K562 (cell line): ENCODE measurements at regions of chr1 and their contacts with region 1.

Region 1: GRCh38 chr1:219416594-219417238 is 196.2 kb downstream of the ZC3H11B start:
- DNase-seq: peak; percentile 26 to 72 (median 36)
- ATAC-seq: peak; percentile 97
- H3K4me3 ChIP-seq: no peak overlapping the region
- H3K27ac ChIP-seq: no peak overlapping the region
- H3K4me1 ChIP-seq: no peaks in the 10 kb centered on the region
- H3K27me3 ChIP-seq: no peaks in the 10 kb centered on the region
- CTCF ChIP-seq: peak; percentile 72 to 80 (median 76)
- EP300 ChIP-seq: no peak
- POLR2A ChIP-seq: no peak
- RAD21 ChIP-seq: peak; percentile 58 to 78

Region 2: DNA sequence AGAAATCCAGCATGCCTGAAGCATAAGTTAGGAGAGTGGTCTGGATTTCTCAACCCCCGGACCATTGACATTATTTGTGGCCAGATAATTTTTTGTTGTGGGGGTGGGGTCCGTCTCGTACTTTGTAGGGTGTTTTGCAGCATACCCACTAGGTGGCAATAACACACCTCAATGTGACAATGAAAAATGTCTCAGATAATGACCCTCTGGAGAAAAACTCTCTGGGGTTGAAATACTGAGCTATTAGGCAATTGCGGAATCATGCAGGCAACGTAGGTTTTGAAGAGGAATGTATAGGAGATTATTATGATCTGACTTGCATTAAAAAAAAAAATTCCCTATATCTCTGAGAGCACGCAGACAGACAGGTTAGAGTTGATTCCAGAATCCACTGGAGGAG is 1156.9 kb before region 1 on chr1:
- CTCF ChIA-PET with region 1: no interaction called
- POLR2A ChIA-PET with region 1: no interaction called
- in situ Hi-C with region 1: no loop called
- intact Hi-C with region 1: loop called (anchors 5 kb)
- DNase-seq: peak; percentile 33 to 69 (median 51)
- ATAC-seq: peak; percentile 96
- H3K4me3 ChIP-seq: no peak overlapping the region
- H3K27ac ChIP-seq: no peak overlapping the region
- H3K4me1 ChIP-seq: no peaks in the 10 kb centered on the region
- H3K27me3 ChIP-seq: peaks cover 0 to 3% of the 10 kb centered on the region in 2 experiments; a peak in 1 of 5 replicates
- CTCF ChIP-seq: peak; percentile 62 to 72 (median 68)
- EP300 ChIP-seq: no peak
- POLR2A ChIP-seq: no peak
- RAD21 ChIP-seq: peak; percentile 15 to 71; a peak in 3 of 4 replicates

Region 3: DNA sequence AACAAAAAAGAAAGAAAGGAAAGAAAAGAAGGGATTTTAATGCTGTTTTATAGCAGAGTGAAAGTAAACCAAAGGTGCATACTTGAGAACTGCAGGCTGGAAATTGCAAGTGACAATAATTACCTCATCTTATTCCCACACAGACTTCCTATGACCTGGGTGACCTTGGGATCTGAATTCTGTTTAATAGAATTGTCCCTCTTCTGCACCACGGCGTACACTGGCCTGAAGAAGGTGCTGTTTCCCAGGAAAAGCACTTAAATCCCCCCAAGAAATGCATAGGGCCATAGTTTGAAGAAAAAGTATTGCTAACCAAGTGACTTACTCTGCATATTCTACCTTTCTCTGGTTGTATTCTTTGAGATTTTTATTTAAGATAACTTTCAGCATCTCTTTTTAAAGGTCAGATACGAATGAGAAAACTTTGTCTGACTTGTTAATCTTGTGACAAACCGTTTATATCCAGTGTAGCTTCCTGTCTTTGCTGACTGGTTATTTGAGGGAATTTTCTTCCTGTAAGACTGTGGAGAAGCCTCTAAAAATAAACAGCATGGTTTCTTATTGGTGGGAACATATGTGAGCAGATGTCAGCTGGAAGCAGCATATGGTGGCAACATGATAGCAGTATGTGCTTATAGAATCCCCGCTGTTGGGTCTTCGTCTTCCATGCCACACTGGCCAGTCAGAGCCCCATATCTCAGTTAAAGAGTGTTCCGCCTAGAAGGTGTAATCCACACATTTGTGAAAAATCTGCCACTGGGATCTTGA is 1055.2 kb before region 1 on chr1:
- CTCF ChIA-PET with region 1: interaction called, 5 read pairs
- POLR2A ChIA-PET with region 1: no interaction called
- in situ Hi-C with region 1: no loop called
- intact Hi-C with region 1: loop called (anchors 1 kb)
- DNase-seq: peak in 2 of 4 experiments; percentile 22 to 37
- ATAC-seq: peak; percentile 72
- H3K4me3 ChIP-seq: no peak overlapping the region
- H3K27ac ChIP-seq: no peak overlapping the region
- H3K4me1 ChIP-seq: peaks cover 0 to 10% of the 10 kb centered on the region in 2 experiments; a peak in 3 of 5 replicates
- H3K27me3 ChIP-seq: no peaks in the 10 kb centered on the region
- CTCF ChIP-seq: peak; percentile 46 to 65 (median 60); a peak in 5 of 6 replicates
- EP300 ChIP-seq: no peak
- POLR2A ChIP-seq: no peak
- RAD21 ChIP-seq: peak; percentile 35 to 74

Region 4: GRCh38 chr1:219209578-219209977 is 207.1 kb before region 1 on chr1:
- CTCF ChIA-PET with region 1: no interaction called
- POLR2A ChIA-PET with region 1: no interaction called
- in situ Hi-C with region 1: no loop called
- intact Hi-C with region 1: loop called (anchors 10 kb)
- DNase-seq: no peak
- ATAC-seq: no peak
- H3K4me3 ChIP-seq: no peak overlapping the region
- H3K27ac ChIP-seq: no peak overlapping the region
- H3K4me1 ChIP-seq: no peaks in the 10 kb centered on the region
- H3K27me3 ChIP-seq: no peaks in the 10 kb centered on the region
- CTCF ChIP-seq: no peak
- EP300 ChIP-seq: no peak
- POLR2A ChIP-seq: no peak
- RAD21 ChIP-seq: no peak